ENCODE measurements at regions of chr3 and their contacts with region 1.

Region 1: DNA sequence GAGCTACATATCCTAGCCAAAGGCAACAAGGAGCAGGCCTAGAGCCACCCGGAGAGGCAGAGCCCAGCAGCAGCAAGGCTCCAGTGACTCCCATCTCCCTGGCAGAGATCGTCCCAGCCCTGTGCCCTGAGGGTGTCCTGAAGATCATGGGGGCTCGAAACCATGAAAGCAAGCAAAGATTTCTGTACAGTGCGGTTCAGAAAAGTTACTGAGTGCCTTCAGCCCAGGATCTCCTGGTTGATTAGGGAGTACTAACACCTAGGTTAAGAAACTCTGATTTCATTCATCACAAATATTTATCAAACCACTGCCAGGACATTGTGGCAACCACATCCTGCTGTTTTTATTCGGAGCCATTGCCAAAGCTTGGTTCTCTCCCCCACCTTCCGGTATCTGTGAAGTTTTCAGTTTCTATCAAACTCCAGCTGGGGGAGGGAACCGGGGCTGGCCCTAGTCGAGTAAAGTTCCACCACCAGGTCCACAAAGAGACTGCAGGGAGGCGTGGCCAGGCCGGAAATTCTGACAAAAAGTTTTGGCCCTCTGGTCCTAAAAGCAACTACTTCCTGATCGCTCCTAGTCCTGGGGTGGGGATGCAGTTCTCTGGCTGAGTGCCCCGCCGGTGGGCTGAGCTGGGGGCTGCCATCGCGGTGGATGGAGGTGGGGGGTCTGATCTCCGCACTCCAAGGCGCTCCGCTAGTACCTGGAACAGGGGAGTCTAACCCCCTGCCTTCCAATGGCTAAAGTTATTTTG is 1.2 kb downstream of the RAB43 start:
- DNase-seq: peak; percentile 88
- ATAC-seq: peak; percentile 63
- H3K4me3 Mint-ChIP-seq: peak overlapping the region; percentile 93
- H3K27ac Mint-ChIP-seq: peak overlapping the region; percentile 98
- H3K4me1 Mint-ChIP-seq: peaks cover 40% of the 10 kb centered on the region
- H3K27me3 Mint-ChIP-seq: no peaks in the 10 kb centered on the region

Region 2: DNA sequence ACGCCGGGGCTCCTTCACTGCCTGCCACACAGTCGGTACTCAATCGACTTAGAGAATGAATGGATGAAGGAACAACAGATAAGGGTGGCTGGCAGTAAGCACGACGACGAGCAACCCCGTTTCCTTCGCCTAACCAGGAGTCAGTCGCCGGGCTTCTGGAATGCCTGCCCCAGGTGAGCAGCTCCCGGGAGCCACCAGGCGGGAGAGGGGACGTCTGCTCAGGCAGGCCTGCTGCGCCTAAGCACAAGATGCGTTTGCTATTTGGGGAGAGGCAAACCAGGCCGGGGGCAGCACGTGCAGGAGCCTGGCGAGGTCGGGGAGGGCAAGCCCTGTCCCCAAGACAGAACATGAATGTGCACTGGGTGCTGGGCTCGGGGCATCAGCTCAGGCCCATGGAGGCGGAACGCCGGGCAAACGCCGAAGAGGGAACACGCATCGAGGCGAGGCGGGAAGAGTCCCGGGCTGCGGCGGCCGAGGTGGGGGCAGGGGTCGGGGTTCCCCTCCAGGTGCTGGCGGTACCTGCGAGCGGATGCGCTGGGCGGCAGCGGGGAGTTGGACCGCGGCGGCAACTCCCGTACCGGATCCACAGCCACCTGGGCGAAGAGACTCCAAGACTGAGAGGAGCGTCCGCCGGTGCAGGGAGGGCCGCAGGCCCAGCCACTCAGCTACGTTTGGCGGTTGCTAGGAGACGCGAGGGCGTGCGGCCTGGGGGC is 126.8 kb before region 1 on chr3 and contains the start of gene CFAP92:
- POLR2A ChIA-PET with region 1: interaction called, 13 read pairs
- DNase-seq: peak; percentile 95
- ATAC-seq: peak; percentile 98
- H3K4me3 Mint-ChIP-seq: peak within 1 kb of the TSS; percentile 64
- H3K27ac Mint-ChIP-seq: peak within 1 kb of the TSS; percentile 10
- H3K4me1 Mint-ChIP-seq: peaks cover 15% of the 10 kb centered on the region
- H3K27me3 Mint-ChIP-seq: peaks cover 3% of the 10 kb centered on the region
- total RNA-seq, gene CFAP92: 0.22 TPM in 1 of 2 experiments, not detected in the other

Region 3: GRCh38 chr3:129026728-129027543 is 93.5 kb before region 1 on chr3:
- POLR2A ChIA-PET with region 1: interaction called, 27 read pairs
- DNase-seq: peak; percentile 95
- ATAC-seq: peak; percentile 100
- H3K4me3 Mint-ChIP-seq: peak overlapping the region; percentile 75
- H3K27ac Mint-ChIP-seq: peak overlapping the region; percentile 89
- H3K4me1 Mint-ChIP-seq: peaks cover 20% of the 10 kb centered on the region
- H3K27me3 Mint-ChIP-seq: no peaks in the 10 kb centered on the region

Region 4: DNA sequence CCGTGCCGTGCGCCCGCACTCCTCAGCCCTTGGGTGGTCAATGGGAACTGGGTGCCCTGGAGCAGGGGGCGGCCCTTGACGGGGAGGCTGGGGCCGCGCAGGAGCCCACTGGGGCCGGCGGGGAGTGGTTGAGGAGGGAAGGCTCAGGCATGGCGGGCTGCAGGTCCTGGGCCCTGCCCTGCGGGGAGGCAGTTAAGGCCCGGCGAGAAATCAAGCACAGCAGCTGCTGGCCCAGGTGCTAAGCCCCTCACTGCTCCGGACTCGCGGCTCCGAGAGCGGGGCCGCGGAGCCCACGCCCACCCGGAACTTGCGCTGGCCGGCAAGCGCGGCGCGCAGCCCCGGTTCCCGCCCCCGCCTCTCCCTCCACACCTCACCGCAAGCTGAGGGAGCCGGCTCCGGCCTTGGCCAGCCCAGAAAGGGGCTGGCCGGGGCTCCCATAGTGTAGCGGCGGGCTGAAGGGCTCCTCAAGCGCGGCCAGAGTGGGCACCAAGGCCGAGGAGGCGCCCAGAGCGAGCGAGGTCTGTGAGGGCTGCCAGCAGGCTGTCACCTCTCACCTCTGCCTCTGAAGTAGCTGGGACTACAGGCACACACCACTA is 52.0 kb before region 1 on chr3:
- POLR2A ChIA-PET with region 1: interaction called, 46 read pairs
- DNase-seq: peak; percentile 56
- ATAC-seq: peak; percentile 70
- H3K4me3 Mint-ChIP-seq: peak overlapping the region; percentile 62
- H3K27ac Mint-ChIP-seq: peak overlapping the region; percentile 73
- H3K4me1 Mint-ChIP-seq: peaks cover 15% of the 10 kb centered on the region
- H3K27me3 Mint-ChIP-seq: peaks cover 3% of the 10 kb centered on the region

Region 5: DNA sequence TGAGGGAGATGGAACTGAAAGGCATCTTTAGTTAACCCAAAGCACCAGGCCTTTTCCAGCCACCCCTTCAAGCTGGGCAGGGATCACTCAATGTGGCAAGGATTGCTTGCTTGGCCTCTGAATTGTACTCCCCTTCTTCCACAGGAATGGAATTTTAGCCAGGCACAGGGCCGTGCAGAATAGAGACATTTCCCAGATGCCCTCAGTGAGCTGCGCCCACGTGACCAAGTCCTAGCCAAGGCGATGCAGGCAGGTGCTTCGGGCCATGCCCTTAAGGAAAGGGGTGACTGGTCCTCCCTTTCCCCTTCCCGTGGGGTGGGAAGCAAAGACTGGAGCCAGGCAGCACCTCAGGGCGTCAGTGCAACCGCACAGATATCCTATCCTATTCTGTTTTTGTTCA is 41.9 kb before region 1 on chr3:
- POLR2A ChIA-PET with region 1: no interaction called
- DNase-seq: no peak
- ATAC-seq: no peak
- H3K4me3 Mint-ChIP-seq: no peak overlapping the region
- H3K27ac Mint-ChIP-seq: no peak overlapping the region
- H3K4me1 Mint-ChIP-seq: peaks cover 9% of the 10 kb centered on the region
- H3K27me3 Mint-ChIP-seq: no peaks in the 10 kb centered on the region

Region 6: DNA sequence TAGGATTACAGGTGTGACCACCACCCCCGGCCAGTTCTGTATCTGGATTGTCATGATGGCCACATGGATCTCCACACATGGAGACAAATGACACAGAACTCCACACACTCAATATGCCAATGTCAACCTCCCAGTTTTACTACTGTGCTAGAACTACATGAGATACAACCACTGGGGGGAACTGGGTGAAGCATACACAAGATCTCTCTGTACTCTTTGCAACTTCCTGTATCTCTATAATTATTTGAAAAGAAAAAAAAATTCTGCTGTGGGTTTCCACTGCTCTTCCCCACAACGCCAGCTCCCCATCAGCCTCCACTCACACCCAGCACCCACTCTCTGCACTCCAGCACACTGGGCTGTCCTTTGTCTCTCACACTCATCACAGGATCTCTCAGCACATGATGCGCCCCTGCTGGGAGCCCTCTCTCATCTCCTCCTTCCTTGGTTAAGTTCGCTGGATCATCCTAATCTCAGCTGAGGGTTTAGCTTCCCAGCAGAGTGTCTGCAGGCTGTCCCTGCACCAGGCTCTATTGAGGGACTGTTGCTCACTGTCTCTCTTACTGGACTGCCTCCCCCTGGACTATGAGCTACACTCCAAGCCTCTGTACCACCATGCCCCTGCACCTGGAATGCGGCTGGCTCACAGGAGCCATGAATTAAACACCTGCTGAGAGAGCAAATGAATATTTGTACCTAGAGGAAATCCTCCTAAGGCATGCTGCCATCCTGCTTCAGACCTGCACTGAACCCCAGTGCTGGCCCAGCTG is 11.9 kb after region 1 on chr3:
- POLR2A ChIA-PET with region 1: interaction called, 36 read pairs
- DNase-seq: no peak
- ATAC-seq: peak; percentile 44
- H3K4me3 Mint-ChIP-seq: no peak overlapping the region
- H3K27ac Mint-ChIP-seq: peak overlapping the region; percentile 63
- H3K4me1 Mint-ChIP-seq: peaks cover 6% of the 10 kb centered on the region
- H3K27me3 Mint-ChIP-seq: no peaks in the 10 kb centered on the region

Region 7: DNA sequence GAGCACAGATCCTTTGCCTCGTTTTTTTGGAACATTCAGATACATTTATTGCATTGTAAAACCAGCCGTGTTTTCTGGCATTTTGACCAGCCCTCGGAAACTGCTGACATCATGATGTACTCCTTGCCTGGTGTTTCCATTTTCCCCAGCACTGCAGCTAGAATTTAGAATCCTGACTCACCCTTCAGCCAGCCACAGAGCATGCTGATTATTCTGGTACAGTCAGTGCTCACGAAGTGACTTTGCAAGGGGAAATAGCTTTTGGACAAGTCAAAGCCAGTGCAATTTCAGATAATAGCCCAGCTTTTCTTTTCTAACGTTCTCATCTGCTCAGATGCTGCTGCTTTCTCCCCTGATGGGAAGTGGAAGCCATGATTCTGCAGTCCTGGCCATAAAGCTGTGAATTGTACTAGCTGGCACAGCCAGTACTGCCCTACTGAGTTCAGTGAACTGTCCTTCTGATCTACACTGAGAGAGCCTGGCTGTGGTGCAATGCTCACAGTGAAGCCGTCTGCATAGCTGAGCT is 75.4 kb after region 1 on chr3:
- POLR2A ChIA-PET with region 1: no interaction called
- DNase-seq: no peak
- ATAC-seq: no peak
- H3K4me3 Mint-ChIP-seq: no peak overlapping the region
- H3K27ac Mint-ChIP-seq: no peak overlapping the region
- H3K4me1 Mint-ChIP-seq: peaks cover 8% of the 10 kb centered on the region
- H3K27me3 Mint-ChIP-seq: no peaks in the 10 kb centered on the region

Region 8: GRCh38 chr3:129238945-129239706 is 118.7 kb after region 1 on chr3:
- POLR2A ChIA-PET with region 1: interaction called, 17 read pairs
- DNase-seq: peak; percentile 56
- ATAC-seq: peak; percentile 80
- H3K4me3 Mint-ChIP-seq: peak overlapping the region; percentile 67
- H3K27ac Mint-ChIP-seq: peak overlapping the region; percentile 93
- H3K4me1 Mint-ChIP-seq: peaks cover 32% of the 10 kb centered on the region
- H3K27me3 Mint-ChIP-seq: no peaks in the 10 kb centered on the region

Region 9: GRCh38 chr3:129278439-129278970 is 158.1 kb after region 1 on chr3 and contains the start of gene HMCES:
- POLR2A ChIA-PET with region 1: interaction called, 18 read pairs
- DNase-seq: peak; percentile 96
- ATAC-seq: peak; percentile 90
- H3K4me3 Mint-ChIP-seq: peak within 1 kb of the TSS; percentile 99
- H3K27ac Mint-ChIP-seq: peak within 1 kb of the TSS; percentile 97
- H3K4me1 Mint-ChIP-seq: peaks cover 40% of the 10 kb centered on the region
- H3K27me3 Mint-ChIP-seq: no peaks in the 10 kb centered on the region
- total RNA-seq, gene HMCES: 59.7 to 60.8 TPM

Measured in activated naive CD8-positive, alpha-beta T cell treated with anti-CD3 and anti-CD28 coated beads, Interleukin-2, amount 10 ng/mL, durations not matched to agents 7 days and 5 days (primary cell).